Panc1 (cell line): ENCODE measurements at regions of chr2 and their contacts with region 1.

Region 1: DNA sequence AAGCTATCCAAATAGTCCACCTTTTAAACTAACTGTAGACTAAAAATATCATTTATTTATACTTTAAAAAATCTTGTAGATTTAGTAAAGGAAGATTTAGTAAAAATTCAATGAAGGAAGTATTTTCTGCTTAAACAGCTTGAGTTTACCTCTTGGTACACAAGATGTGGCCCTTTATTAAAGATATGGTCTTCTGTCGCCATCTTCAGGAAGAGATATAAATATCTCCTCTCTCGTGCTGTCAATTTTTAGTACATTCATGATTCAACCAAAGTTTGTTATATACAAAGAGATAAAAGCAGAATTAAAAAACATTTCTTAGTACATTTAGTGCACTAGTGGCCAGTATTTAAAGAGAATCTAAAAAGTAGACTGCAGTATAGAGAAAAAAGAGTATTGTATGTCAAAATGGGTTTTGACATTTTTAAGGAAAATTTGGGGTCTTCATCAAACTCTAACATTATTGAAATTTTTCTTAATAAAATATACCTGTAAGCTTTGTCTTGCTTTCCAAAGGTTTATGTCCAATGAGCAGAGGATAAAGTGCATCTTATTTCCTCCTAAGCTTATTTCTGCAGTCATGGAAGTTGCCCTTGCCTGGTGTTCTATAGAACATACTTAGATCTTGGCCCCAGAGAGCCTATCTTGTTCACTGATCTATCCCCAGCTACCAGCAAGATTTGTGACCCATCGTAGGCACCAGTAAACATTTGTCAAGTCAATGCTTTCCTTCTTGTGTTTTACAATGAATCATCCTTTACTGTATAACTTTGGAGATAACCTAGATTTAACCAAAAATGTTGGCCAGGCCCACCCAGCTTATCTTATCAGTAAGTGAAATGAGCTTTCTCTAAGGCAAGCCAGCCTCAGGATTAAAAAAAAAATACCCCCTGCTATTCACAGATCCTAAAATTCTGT is 18.5 kb upstream of the EML6 start:
- DNase-seq: no peak
- ATAC-seq: peak; percentile 52; the same call in 1 of the 2 replicates
- H3K4me3 ChIP-seq: no peak overlapping the region
- H3K27ac ChIP-seq: no peak overlapping the region
- H3K4me1 ChIP-seq: peaks cover 4% of the 10 kb centered on the region; the same call in 1 of the 2 replicates
- H3K27me3 ChIP-seq: no peaks in the 10 kb centered on the region
- CTCF ChIP-seq: peak; percentile 65; the same call in 1 of the 2 replicates

Region 2: DNA sequence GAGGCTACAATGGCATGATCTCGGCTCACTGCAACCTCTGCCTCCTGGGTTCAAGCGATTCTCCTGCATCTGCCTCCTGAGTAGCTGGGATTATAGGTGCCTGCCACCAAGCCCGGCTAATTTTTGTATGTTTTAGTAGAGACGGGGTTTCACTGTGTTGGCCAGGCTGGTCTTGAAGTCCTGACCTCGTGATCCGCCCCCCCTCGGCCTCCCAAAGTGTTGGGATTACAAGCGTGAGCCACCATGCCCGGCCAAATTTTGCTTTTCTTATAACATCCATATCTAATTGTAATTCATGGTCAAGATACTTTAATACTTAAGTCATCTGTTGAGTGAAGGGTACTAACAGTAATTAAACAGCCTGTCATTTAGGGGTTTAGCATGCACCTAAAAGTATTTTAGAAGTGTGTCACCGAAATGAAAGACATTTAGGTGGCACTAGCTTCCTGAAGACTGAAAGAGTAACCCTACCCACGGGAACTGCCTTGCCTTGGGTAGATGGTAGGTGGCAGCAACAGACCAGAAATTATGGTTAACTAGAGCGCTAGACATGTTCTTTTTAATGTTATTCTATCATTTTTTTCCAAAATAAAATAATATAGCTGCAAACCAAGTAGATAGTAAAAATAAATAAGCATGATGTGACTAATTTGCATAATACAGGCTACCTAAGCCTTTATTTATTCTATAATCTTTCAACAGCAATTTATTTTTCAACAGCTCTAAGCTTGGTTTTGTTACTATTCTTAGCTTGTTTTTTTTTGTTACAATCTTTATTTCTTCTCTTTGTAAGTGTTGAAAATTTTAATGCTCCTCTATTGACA is 598.1 kb before region 1 on chr2:
- CTCF ChIA-PET with region 1: interaction called, 19 read pairs
- POLR2A ChIA-PET with region 1: no interaction called
- in situ Hi-C with region 1: no loop called
- intact Hi-C with region 1: loop called (anchors 5 kb)
- DNase-seq: no peak
- ATAC-seq: peak; percentile 94
- H3K4me3 ChIP-seq: no peak overlapping the region
- H3K27ac ChIP-seq: no peak overlapping the region
- H3K4me1 ChIP-seq: no peaks in the 10 kb centered on the region
- H3K27me3 ChIP-seq: no peaks in the 10 kb centered on the region
- CTCF ChIP-seq: peak; percentile 81

Region 3: GRCh38 chr2:54149638-54150441 is 555.1 kb before region 1 on chr2:
- CTCF ChIA-PET with region 1: interaction called, 14 read pairs
- POLR2A ChIA-PET with region 1: no interaction called
- in situ Hi-C with region 1: no loop called
- intact Hi-C with region 1: no loop called
- DNase-seq: no peak
- ATAC-seq: no peak
- H3K4me3 ChIP-seq: no peak overlapping the region
- H3K27ac ChIP-seq: no peak overlapping the region
- H3K4me1 ChIP-seq: no peaks in the 10 kb centered on the region
- H3K27me3 ChIP-seq: no peaks in the 10 kb centered on the region
- CTCF ChIP-seq: no peak

Region 4: GRCh38 chr2:54520687-54521086 is 184.3 kb before region 1 on chr2:
- CTCF ChIA-PET with region 1: no interaction called
- POLR2A ChIA-PET with region 1: no interaction called
- in situ Hi-C with region 1: no loop called
- intact Hi-C with region 1: loop called (anchors 2 kb)
- DNase-seq: no peak
- ATAC-seq: peak; percentile 78
- H3K4me3 ChIP-seq: no peak overlapping the region
- H3K27ac ChIP-seq: peak overlapping the region; percentile 19; the same call in 1 of the 2 replicates
- H3K4me1 ChIP-seq: peaks cover 16% of the 10 kb centered on the region
- H3K27me3 ChIP-seq: no peaks in the 10 kb centered on the region
- CTCF ChIP-seq: no peak

Region 5: DNA sequence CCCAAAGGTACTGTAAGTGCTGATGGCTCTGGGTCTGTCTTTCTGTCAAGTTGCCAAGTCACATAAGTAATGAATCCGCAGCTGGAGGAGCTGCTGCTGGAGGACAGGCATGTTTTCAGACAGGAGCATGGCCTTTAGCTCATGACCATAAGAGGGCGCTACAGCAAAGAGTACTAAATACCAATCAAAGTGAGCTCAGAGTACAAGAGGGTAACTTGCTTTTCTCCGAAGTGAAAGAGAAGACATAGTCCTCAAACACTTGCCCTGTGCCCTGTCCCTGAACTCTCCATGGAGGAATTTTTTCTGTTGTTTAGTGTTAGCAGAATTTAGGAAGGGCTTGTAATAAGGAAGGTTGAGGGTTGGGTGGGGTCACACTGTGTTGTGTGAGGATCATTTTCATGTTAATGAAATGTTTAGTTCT is 39.5 kb before region 1 on chr2:
- CTCF ChIA-PET with region 1: interaction called, 10 read pairs
- POLR2A ChIA-PET with region 1: no interaction called
- in situ Hi-C with region 1: no loop called
- intact Hi-C with region 1: no loop called
- DNase-seq: peak; percentile 18
- ATAC-seq: peak; percentile 75
- H3K4me3 ChIP-seq: no peak overlapping the region
- H3K27ac ChIP-seq: no peak overlapping the region
- H3K4me1 ChIP-seq: no peaks in the 10 kb centered on the region
- H3K27me3 ChIP-seq: no peaks in the 10 kb centered on the region
- CTCF ChIP-seq: peak; percentile 83

Region 6: GRCh38 chr2:54787755-54788366 is 82.9 kb after region 1 on chr2:
- CTCF ChIA-PET with region 1: no interaction called
- POLR2A ChIA-PET with region 1: no interaction called
- in situ Hi-C with region 1: no loop called
- intact Hi-C with region 1: no loop called
- DNase-seq: no peak
- ATAC-seq: no peak
- H3K4me3 ChIP-seq: no peak overlapping the region
- H3K27ac ChIP-seq: no peak overlapping the region
- H3K4me1 ChIP-seq: no peaks in the 10 kb centered on the region
- H3K27me3 ChIP-seq: no peaks in the 10 kb centered on the region
- CTCF ChIP-seq: no peak